ENCODE measurements at regions of chr5 and their contacts with region 1.

Region 1: DNA sequence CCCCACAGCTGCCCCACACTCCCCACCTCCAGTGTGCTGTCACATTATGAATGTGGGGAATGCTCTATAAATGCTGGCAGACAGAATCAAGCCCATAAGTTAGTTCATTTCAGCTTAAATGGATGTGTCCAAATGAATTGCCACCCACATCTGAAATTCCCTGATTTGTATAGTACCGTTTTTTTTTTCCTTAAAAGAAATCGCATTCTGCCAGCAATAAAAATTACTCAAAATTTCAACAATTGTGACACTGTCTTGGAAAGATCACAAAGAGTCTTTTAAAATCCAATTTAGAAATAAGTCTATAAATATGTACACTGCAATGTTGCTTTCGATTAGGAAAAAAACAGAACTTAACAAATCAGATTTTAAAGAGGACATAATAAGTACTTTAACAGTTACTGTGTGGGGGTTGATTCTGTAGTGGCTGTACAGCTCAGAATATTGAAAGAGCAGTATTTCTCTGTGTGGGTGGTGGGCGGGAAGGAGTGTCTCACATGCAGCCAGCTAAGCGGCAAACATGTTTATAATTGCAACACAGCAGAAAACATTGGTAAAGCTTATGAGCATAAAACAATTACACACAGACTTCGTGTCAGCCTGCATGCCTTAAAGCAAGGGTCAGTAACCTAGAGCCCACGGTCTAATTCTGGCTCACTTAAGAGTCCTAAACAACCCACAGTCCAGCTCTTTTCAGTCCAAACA is 24.9 kb upstream of the CSNK1G3 start:
- DNase-seq: peak; percentile 34
- H3K4me3 ChIP-seq: no peak overlapping the region
- H3K27ac ChIP-seq: no peak overlapping the region
- H3K4me1 ChIP-seq: peaks cover 13% of the 10 kb centered on the region
- H3K27me3 ChIP-seq: no peaks in the 10 kb centered on the region
- CTCF ChIP-seq: no peak

Region 2: GRCh38 chr5:122967625-122968024 is 519.5 kb before region 1 on chr5:
- CTCF ChIA-PET with region 1: no interaction called
- POLR2A ChIA-PET with region 1: no interaction called
- intact Hi-C with region 1: no loop called
- DNase-seq: no peak
- H3K4me3 ChIP-seq: no peak overlapping the region
- H3K27ac ChIP-seq: no peak overlapping the region
- H3K4me1 ChIP-seq: no peaks in the 10 kb centered on the region
- H3K27me3 ChIP-seq: no peaks in the 10 kb centered on the region
- CTCF ChIP-seq: no peak

Region 3: DNA sequence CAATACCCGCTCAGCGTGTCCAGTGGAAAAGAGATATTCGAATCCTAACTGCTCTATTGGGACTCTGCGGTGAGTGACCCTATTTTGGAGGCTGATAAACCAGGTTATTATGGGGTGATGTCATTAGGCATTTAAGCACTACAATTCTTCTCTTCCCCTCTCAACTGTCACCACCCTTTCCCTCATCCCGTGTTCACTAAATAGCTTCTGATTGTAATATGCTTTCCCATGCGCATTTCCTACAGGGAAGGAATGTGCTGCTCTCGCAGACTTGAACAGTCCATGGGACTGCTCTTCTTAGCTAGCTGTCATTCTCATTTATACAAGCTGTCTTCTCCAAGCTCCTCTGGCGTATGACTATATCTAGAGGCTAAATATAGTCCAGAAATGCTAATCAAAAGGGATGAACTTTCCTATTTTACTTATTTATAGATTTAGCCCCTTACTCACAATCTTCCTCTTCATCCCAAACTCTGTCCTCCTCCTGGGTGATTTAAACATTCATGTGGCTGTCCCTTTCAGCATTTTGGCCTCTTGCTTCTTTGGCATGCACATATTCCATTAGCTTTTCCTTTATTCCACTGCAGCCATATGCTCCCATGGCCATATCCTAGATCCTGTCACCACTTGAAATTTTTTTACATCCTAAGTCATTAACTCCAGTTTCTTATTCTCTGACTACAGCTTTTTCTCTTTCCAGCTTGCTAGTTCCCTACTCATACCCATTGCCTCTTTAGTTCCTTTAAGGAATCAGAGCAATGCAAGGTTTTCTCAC is 14.8 kb before region 1 on chr5:
- CTCF ChIA-PET with region 1: no interaction called
- POLR2A ChIA-PET with region 1: interaction called, 16 read pairs
- intact Hi-C with region 1: no loop called
- DNase-seq: no peak
- H3K4me3 ChIP-seq: no peak overlapping the region
- H3K27ac ChIP-seq: no peak overlapping the region
- H3K4me1 ChIP-seq: peaks cover 10% of the 10 kb centered on the region
- H3K27me3 ChIP-seq: no peaks in the 10 kb centered on the region
- CTCF ChIP-seq: no peak